Left cardiac atrium (tissue), 4 donors: ENCODE measurements at regions of chr2 and their contacts with region 1.

Region 1: DNA sequence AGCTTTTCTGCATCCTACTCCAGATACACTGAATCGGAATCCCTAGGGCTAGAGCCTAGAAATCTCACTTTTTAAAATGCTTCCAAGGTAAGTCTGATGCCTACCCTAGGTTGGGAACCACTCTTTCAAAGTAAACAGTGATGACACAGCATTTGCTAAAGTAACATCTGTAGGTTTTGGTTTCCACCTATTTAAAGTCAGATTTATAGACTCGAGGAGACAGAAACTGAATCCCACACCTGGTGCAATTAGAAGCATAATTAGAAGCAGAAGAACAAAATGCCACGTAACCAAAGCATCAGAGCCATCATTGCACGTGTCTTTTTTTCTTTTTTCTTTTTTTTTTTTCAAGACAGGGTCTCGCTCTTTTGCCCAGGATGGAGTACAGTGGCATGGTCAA is 40.9 kb downstream of the PDK1 start:
- DNase-seq: no peak
- ATAC-seq: no peak

Region 2: GRCh38 chr2:172674034-172674967 is 77.5 kb after region 1 on chr2:
- intact Hi-C with region 1: loop called in 1 of 2 experiments (anchors 10 kb)
- DNase-seq: peak; percentile 43
- ATAC-seq: peak; percentile 57 to 80

Region 3: DNA sequence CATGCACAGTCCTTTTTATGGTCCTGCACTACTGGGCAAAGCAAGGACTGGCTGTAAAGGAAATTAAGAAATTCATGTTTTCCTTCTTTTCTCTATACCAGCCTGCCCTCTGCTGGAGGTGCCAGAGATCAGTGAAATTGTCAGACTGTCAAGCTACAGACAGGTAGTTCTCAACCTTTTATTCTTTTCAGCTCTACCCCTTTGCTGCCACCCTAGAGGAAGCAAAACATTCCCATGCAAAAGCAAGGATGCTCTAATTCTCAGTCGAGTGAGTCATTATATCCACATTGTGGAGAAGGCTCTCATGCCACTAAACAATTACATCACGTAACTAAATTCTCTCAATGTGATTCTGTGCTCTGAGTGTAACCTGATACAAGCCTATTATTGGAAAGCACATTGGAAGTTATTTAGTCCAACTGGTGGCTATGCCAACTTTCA is 113.8 kb after region 1 on chr2:
- intact Hi-C with region 1: loop called in 1 of 2 experiments (anchors 10 kb)
- DNase-seq: no peak
- ATAC-seq: peak; percentile 55 to 64